ENCODE measurements at regions of chr20 and their contacts with region 1.

Region 1: DNA sequence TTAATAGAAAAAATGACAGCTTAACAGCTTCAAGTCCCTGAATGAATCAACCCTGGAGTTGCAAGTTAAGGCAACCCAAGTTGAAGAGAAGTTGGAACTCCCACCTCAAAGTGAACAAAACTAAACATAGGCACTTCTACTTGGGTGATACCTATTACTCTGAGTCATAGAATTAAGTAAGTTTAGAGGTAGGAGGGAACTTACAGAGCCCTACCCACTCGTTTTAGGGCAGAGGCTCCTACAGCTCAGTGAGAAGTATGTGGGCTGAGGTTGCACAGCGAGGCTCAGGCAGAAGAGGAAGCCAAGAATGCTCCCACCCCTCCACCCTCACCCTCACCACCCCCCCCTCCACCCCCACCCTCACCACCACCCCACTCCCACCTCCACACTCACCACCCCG is 42.2 kb downstream of the NFATC2 start:
- DNase-seq: peak in 33 of 35 experiments; percentile 24 to 83 (median 53)
- ATAC-seq: peak; percentile 81 to 89 (median 88)
- H3K4me3 ChIP-seq: no peak overlapping the region
- H3K4me3 Mint-ChIP-seq: peak overlapping the region in 1 of 3 donors; percentile 49
- H3K27ac ChIP-seq: peak overlapping the region; percentile 56
- H3K27ac Mint-ChIP-seq: peak overlapping the region; percentile 92 to 96
- H3K4me1 ChIP-seq: peaks cover 55 to 70% of the 10 kb centered on the region in 2 experiments
- H3K4me1 Mint-ChIP-seq: peaks cover 86 to 90% (median 87%) of the 10 kb centered on the region in 3 donors
- H3K27me3 ChIP-seq: no peaks in the 10 kb centered on the region
- H3K27me3 Mint-ChIP-seq: no peaks in the 10 kb centered on the region

Region 2: DNA sequence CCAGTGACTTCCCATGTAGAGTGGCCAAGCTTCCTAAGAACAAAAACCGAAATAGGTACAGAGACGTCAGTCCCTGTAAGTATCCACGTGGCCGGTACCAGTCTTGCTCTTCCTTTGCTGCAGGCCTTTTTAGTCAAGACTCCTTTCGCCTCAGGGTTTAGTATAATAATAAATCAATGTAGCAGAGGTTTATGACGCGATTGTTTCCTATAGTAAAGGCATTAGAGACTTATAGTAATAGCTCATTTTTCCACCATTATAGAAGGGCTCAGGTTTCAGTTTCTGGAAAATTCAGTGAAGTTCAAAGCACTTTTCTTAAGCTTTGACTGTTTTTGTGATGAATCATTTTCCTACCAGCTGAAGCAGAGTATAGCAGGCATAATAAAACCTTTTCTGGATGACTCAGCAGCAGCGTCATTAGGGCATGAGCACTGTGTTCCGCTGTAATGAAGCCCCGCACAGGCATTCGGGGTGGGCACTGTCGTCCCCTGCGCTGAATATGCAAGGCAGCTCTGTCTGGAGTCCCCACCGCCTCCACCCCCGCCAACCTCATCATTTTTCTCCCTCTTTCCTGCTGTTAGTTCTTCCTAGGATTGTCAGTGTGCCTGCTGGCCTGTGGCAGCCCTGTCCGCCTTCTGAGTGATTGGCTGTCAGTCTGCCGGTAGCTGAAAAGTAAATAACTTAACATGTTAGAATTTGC is 938.8 kb before region 1 on chr20:
- CTCF ChIA-PET with region 1: no interaction called
- POLR2A ChIA-PET with region 1: no interaction called
- DNase-seq: peak in 1 of 35 experiments; percentile 13
- ATAC-seq: peak in 3 of 4 experiments; percentile 43 to 79 (median 57)
- H3K4me3 ChIP-seq: no peak overlapping the region
- H3K4me3 Mint-ChIP-seq: peak overlapping the region in 2 of 3 donors; percentile 38 to 44
- H3K27ac ChIP-seq: no peak overlapping the region
- H3K27ac Mint-ChIP-seq: peak overlapping the region; percentile 74 to 87
- H3K4me1 ChIP-seq: peaks cover 0 to 21% of the 10 kb centered on the region in 2 experiments
- H3K4me1 Mint-ChIP-seq: peaks cover 49 to 77% (median 69%) of the 10 kb centered on the region in 3 donors
- H3K27me3 ChIP-seq: no peaks in the 10 kb centered on the region
- H3K27me3 Mint-ChIP-seq: no peaks in the 10 kb centered on the region

Region 3: DNA sequence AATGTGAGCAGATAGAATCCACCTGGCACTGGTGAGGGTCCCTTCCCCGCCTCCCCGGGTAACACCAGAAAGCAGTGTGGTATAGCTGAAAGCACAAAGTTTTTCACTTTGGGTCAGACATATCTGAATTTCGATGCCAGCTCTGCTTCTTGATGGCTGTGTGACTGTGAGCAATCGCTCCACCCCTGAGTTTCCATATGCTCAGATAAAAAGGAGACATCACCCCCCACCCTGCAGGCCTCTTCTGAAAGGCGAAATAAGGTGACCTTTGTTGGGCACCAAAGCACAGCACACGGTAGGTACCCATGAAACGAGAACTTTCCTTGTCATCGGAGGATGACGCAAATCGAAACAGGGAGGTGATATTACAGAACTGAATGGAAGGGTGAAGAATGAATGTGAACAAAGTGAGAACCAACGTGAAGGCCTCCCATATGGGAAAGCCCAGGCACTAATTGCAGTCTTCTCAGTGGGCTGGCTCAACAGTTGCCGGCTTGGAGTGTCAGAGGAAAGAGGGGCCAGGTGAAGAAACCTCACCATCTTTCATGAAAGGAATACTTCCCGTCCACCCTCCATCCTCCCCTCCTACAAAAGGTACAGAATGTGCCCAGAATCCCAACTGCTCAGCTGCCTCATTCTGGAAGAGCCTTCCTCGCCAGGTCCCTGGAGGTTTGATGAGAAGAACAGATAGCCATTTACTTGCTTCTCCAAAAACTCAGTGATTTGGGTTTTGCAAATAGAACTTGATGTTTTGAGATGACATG is 19.6 kb before region 1 on chr20:
- CTCF ChIA-PET with region 1: interaction called in 1 of 2 experiments, 13 read pairs
- POLR2A ChIA-PET with region 1: interaction called in 1 of 2 experiments, 3 read pairs
- DNase-seq: peak in 10 of 35 experiments; percentile 10 to 72 (median 22)
- ATAC-seq: peak in 3 of 4 experiments; percentile 13 to 68 (median 40)
- H3K4me3 ChIP-seq: no peak overlapping the region
- H3K4me3 Mint-ChIP-seq: peak overlapping the region; percentile 63 to 71 (median 64)
- H3K27ac ChIP-seq: peak overlapping the region; percentile 57
- H3K27ac Mint-ChIP-seq: peak overlapping the region; percentile 87 to 88
- H3K4me1 ChIP-seq: peaks cover 4 to 50% of the 10 kb centered on the region in 2 experiments
- H3K4me1 Mint-ChIP-seq: peaks cover 79 to 89% (median 84%) of the 10 kb centered on the region in 3 donors
- H3K27me3 ChIP-seq: no peaks in the 10 kb centered on the region
- H3K27me3 Mint-ChIP-seq: no peaks in the 10 kb centered on the region

Region 4: GRCh38 chr20:51541189-51542032 is 41.1 kb after region 1 on chr20:
- CTCF ChIA-PET with region 1: interaction called in 1 of 2 experiments, 14 read pairs
- POLR2A ChIA-PET with region 1: interaction called in 1 of 2 experiments, 10 read pairs
- DNase-seq: peak; percentile 57 to 93 (median 83)
- ATAC-seq: peak; percentile 73 to 83 (median 74)
- H3K4me3 ChIP-seq: peak overlapping the region; percentile 90 to 96
- H3K4me3 Mint-ChIP-seq: peak overlapping the region; percentile 98 to 99 (median 99)
- H3K27ac ChIP-seq: peak overlapping the region; percentile 97
- H3K27ac Mint-ChIP-seq: peak overlapping the region; percentile 94
- H3K4me1 ChIP-seq: peaks cover 12 to 61% of the 10 kb centered on the region in 2 experiments
- H3K4me1 Mint-ChIP-seq: peaks cover 54 to 57% (median 54%) of the 10 kb centered on the region in 3 donors
- H3K27me3 ChIP-seq: no peaks in the 10 kb centered on the region
- H3K27me3 Mint-ChIP-seq: no peaks in the 10 kb centered on the region

Measured in T-cell (primary cell).